ENCODE measurements at regions of chr3 and their contacts with region 1.

Region 1: DNA sequence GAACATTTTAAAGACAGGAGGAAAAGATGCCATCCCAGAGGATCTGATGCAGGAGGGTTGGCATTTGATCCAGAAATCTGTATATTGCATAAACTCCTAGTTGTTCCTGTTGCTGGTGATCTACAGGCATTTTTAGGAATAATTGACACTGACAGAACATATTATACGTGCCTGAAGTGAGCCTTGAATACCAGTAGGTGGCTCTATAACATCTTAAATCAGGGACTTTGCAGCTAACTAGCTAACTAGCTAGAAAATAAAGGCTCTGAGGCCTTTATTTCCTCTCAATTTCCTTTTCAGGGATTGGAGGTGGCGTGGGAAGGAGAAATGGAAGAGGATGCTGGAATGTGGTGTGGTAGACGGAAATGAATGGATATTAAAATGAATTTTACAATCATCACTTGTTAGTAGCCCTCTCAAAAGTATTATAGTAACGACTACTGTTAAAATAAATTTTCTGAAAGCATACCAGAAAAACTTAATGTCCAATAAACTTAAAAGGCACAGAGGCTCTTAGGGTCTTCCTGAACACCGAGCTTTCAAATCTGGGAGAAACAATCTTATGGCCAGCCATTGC is 73.9 kb upstream of the ZBED2 start:
- DNase-seq: no peak
- ATAC-seq: peak; percentile 45
- H3K4me3 Mint-ChIP-seq: no peak overlapping the region
- H3K27ac Mint-ChIP-seq: peak overlapping the region; percentile 74
- H3K4me1 Mint-ChIP-seq: peaks cover 41% of the 10 kb centered on the region
- H3K27me3 Mint-ChIP-seq: no peaks in the 10 kb centered on the region
- CTCF ChIP-seq: peak; percentile 46

Region 2: GRCh38 chr3:111412656-111413055 is 256.3 kb before region 1 on chr3:
- CTCF ChIA-PET with region 1: no interaction called
- POLR2A ChIA-PET with region 1: no interaction called
- intact Hi-C with region 1: no loop called
- DNase-seq: no peak
- ATAC-seq: no peak
- H3K4me3 Mint-ChIP-seq: no peak overlapping the region
- H3K27ac Mint-ChIP-seq: no peak overlapping the region
- H3K4me1 Mint-ChIP-seq: peaks cover 3% of the 10 kb centered on the region
- H3K27me3 Mint-ChIP-seq: peaks cover 3% of the 10 kb centered on the region
- CTCF ChIP-seq: no peak

Region 3: DNA sequence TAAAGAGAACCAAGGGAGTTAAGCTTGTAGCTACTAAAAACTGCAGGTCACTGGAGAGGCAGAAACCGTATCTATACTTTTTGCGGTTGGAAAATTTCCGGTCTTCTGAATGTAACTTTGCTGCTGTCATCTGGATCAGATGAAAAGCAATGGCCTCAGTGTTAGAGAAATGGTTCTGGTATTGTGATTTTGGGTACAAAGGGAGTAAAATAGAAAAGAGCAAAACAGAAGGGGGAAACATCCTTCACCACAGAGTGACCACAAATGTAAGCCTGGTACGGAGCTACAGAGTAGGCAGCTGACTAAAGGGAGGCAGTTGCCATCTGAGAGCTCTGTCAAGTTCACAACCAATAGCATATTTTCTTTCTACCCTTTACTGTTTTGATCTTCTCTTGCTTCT is 121.4 kb before region 1 on chr3:
- CTCF ChIA-PET with region 1: no interaction called
- POLR2A ChIA-PET with region 1: no interaction called
- intact Hi-C with region 1: loop called (anchors 5 kb)
- DNase-seq: no peak
- ATAC-seq: peak; percentile 68
- H3K4me3 Mint-ChIP-seq: no peak overlapping the region
- H3K27ac Mint-ChIP-seq: no peak overlapping the region
- H3K4me1 Mint-ChIP-seq: peaks cover 13% of the 10 kb centered on the region
- H3K27me3 Mint-ChIP-seq: no peaks in the 10 kb centered on the region
- CTCF ChIP-seq: no peak

Region 4: GRCh38 chr3:111616417-111617105 is 52.4 kb before region 1 on chr3:
- CTCF ChIA-PET with region 1: interaction called, 11 read pairs
- POLR2A ChIA-PET with region 1: no interaction called
- intact Hi-C with region 1: no loop called
- DNase-seq: no peak
- ATAC-seq: peak; percentile 89
- H3K4me3 Mint-ChIP-seq: no peak overlapping the region
- H3K27ac Mint-ChIP-seq: peak overlapping the region; percentile 89
- H3K4me1 Mint-ChIP-seq: peaks cover 21% of the 10 kb centered on the region
- H3K27me3 Mint-ChIP-seq: no peaks in the 10 kb centered on the region
- CTCF ChIP-seq: no peak

Region 5: GRCh38 chr3:111859974-111860859 is 191.2 kb after region 1 on chr3:
- CTCF ChIA-PET with region 1: interaction called, 8 read pairs
- POLR2A ChIA-PET with region 1: no interaction called
- intact Hi-C with region 1: loop called (anchors 1 kb)
- DNase-seq: peak; percentile 52
- ATAC-seq: peak; percentile 80
- H3K4me3 Mint-ChIP-seq: peak overlapping the region; percentile 91
- H3K27ac Mint-ChIP-seq: peak overlapping the region; percentile 87
- H3K4me1 Mint-ChIP-seq: peaks cover 18% of the 10 kb centered on the region
- H3K27me3 Mint-ChIP-seq: peaks cover 9% of the 10 kb centered on the region
- CTCF ChIP-seq: no peak

Region 6: GRCh38 chr3:111978493-111979433 is 309.8 kb after region 1 on chr3 and contains the start of gene ABHD10:
- CTCF ChIA-PET with region 1: interaction called, 7 read pairs
- POLR2A ChIA-PET with region 1: interaction called, 13 read pairs
- intact Hi-C with region 1: loop called (anchors 1 kb)
- DNase-seq: peak; percentile 90
- ATAC-seq: peak; percentile 94
- H3K4me3 Mint-ChIP-seq: peak within 1 kb of the TSS; percentile 93
- H3K27ac Mint-ChIP-seq: peak within 1 kb of the TSS; percentile 94
- H3K4me1 Mint-ChIP-seq: peaks cover 43% of the 10 kb centered on the region
- H3K27me3 Mint-ChIP-seq: no peaks in the 10 kb centered on the region
- CTCF ChIP-seq: no peak
- total RNA-seq, gene ABHD10: 25.2 and 28.4 TPM in 2 replicates

Region 7: GRCh38 chr3:112043603-112044201 is 374.7 kb after region 1 on chr3:
- CTCF ChIA-PET with region 1: interaction called, 10 read pairs
- POLR2A ChIA-PET with region 1: no interaction called
- intact Hi-C with region 1: loop called (anchors 2 kb)
- DNase-seq: no peak
- ATAC-seq: peak; percentile 92
- H3K4me3 Mint-ChIP-seq: no peak overlapping the region
- H3K27ac Mint-ChIP-seq: no peak overlapping the region
- H3K4me1 Mint-ChIP-seq: peaks cover 6% of the 10 kb centered on the region
- H3K27me3 Mint-ChIP-seq: no peaks in the 10 kb centered on the region
- CTCF ChIP-seq: peak; percentile 95